ENCODE measurements at regions of chr3 and their contacts with region 1.

Region 1: GRCh38 chr3:194315088-194315964 is 35.8 kb downstream of the CPN2 start:
- DNase-seq: peak in 1 of 2 donors; percentile 89
- H3K4me3 ChIP-seq: peak overlapping the region; percentile 53 to 54
- H3K27ac ChIP-seq: no peak overlapping the region
- H3K4me1 ChIP-seq: peaks cover 4 to 11% of the 10 kb centered on the region in 2 donors
- H3K27me3 ChIP-seq: no peaks in the 10 kb centered on the region
- CTCF ChIP-seq: peak; percentile 96 to 98 (median 96)

Region 2: DNA sequence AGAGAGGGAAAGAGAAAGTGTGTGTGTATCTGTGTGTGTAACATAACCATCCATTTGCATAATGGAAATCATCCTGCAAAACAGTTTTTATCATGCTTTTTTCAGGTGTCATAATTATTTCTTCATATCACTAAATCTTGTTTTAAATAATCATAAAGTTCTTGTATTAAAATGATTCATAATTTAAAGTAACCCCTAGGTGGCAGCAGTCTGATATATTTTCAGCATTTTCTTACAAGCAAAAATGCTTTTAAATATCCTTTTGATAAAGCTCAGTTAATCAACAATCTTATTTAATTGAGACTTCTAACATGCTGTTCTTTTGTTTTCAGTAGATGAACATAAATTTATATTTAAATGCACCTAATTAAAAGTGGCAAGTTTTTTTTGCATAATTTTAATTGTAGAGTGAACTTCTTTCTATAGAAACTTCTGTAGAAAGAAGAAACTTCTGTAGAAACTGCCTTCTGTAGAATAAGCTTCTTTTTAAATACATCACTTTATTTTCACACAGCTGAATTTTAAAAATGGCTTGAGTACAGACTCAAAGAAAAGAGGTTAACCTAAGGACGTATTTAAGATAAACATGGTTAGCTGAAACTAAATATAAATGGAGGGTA is 649.8 kb before region 1 on chr3:
- intact Hi-C with region 1: loop called (anchors 5 kb)
- DNase-seq: no peak
- H3K4me3 ChIP-seq: no peak overlapping the region
- H3K27ac ChIP-seq: no peak overlapping the region
- H3K4me1 ChIP-seq: no peaks in the 10 kb centered on the region
- H3K27me3 ChIP-seq: no peaks in the 10 kb centered on the region
- CTCF ChIP-seq: peak in 2 of 3 experiments; percentile 38 to 43

Region 3: DNA sequence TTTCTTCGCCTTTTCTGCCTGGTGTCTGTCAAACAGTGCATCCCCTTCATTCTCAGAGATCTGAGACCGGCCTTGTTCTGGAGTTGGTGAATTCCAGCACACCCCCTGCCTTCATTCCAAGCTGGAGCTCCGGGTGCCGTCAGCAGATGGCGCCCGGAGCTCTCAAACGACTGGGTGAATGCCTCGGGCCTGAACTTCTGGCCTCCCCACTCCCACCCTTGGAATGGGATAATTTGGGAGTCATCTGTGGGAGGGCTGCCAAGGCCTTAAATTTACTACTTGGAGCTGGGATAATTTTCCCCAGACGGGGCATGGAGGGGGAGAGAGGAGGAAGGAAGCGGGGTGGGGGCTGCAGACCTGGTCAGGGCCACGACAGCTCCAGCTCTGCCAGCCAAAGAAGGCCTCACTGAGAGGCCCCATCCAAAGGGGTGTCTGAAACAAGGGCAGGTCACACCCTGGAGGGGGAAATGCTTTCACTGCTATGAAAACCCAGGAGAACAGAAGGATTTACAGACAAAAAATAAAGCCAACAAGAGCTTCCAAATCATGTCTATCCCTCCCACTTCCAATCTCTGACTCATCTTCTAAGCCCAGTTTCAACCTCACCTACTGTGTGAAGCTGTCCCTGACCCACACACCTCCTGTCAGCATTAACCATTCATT is 534.4 kb before region 1 on chr3:
- intact Hi-C with region 1: loop called (anchors 1 kb)
- DNase-seq: peak in 1 of 2 donors; percentile 78
- H3K4me3 ChIP-seq: no peak overlapping the region
- H3K27ac ChIP-seq: no peak overlapping the region
- H3K4me1 ChIP-seq: peaks cover 0 to 4% of the 10 kb centered on the region in 2 donors
- H3K27me3 ChIP-seq: no peaks in the 10 kb centered on the region
- CTCF ChIP-seq: peak; percentile 65 to 78 (median 73)

Region 4: DNA sequence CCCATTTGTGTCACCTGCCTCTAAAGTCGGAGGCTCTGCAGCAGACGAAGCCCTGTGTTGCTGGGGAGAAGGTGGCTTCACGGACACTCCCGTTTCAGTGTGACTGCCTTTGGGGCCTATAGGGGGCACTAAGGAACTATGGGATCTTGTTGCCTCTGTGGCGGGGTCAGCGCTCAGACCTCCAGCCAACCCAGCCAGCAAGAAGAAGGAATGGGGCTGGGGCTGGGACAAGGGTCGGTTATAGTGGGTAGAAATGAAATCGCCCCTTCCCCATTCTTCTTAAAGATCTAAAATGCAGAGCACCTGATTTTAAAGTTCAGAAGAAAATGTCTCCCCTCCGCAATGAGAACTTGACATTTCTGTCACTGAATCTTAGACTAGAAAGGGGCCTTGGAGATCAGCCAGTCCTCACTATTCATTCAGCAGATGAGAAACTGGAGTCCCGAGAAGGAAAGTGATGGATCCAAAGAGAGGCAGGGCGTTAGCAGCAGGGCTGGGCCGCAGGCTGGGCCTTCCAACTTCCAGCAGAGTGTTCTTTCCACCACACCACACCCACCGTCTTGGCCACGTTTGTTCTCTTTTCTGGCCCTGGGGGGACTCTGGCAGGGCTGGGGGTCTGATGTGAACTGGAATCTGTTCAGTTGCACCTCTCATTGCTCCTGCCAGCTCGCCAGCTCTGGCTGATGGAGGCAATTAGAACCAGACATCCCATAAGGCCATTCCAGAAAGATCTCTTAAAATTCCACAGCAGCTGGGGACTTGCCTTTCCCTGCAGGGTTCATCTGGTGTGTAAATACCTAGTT is 526.9 kb before region 1 on chr3:
- intact Hi-C with region 1: loop called (anchors 2 kb)
- DNase-seq: peak in 1 of 2 donors; percentile 63
- H3K4me3 ChIP-seq: no peak overlapping the region
- H3K27ac ChIP-seq: no peak overlapping the region
- H3K4me1 ChIP-seq: no peaks in the 10 kb centered on the region
- H3K27me3 ChIP-seq: no peaks in the 10 kb centered on the region
- CTCF ChIP-seq: peak; percentile 43 to 70 (median 52)

Region 5: GRCh38 chr3:193946945-193947344 is 368.4 kb before region 1 on chr3:
- intact Hi-C with region 1: loop called (anchors 10 kb)
- DNase-seq: no peak
- H3K4me3 ChIP-seq: no peak overlapping the region
- H3K27ac ChIP-seq: no peak overlapping the region
- H3K4me1 ChIP-seq: peaks cover 4 to 5% of the 10 kb centered on the region in 2 donors
- H3K27me3 ChIP-seq: no peaks in the 10 kb centered on the region
- CTCF ChIP-seq: no peak

Region 6: GRCh38 chr3:194296454-194297263 is 18.7 kb before region 1 on chr3:
- intact Hi-C with region 1: loop called (anchors 2 kb)
- DNase-seq: peak in 1 of 2 donors; percentile 80
- H3K4me3 ChIP-seq: peak overlapping the region; percentile 35 to 52
- H3K27ac ChIP-seq: peak overlapping the region in 1 of 2 donors; percentile 1
- H3K4me1 ChIP-seq: peaks cover 0 to 18% of the 10 kb centered on the region in 2 donors
- H3K27me3 ChIP-seq: no peaks in the 10 kb centered on the region
- CTCF ChIP-seq: no peak

Region 7: DNA sequence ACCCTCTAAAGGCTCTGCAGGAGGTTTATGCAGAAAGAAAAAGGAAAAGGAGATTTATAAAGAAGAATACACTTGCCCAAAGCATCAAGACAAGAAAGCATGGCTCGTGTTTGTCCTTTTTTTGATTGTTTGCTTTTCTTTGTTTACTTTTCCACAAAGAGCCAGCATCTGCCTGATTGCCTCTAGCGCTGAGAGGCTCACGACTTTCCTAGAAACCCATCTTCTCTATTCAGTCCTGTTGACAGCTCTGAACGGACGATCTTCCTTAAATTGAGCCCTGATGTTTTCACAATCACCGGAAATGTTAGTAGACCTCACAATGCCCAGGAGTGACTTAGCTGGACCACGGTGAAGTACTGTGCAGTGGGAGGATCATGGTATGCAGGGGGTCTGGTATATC is 71.3 kb after region 1 on chr3:
- intact Hi-C with region 1: no loop called
- DNase-seq: no peak
- H3K4me3 ChIP-seq: no peak overlapping the region
- H3K27ac ChIP-seq: no peak overlapping the region
- H3K4me1 ChIP-seq: no peaks in the 10 kb centered on the region
- H3K27me3 ChIP-seq: no peaks in the 10 kb centered on the region
- CTCF ChIP-seq: no peak